Body of pancreas (tissue), 4 donors: ENCODE measurements at regions of chr3 and their contacts with region 1.

Region 1: DNA sequence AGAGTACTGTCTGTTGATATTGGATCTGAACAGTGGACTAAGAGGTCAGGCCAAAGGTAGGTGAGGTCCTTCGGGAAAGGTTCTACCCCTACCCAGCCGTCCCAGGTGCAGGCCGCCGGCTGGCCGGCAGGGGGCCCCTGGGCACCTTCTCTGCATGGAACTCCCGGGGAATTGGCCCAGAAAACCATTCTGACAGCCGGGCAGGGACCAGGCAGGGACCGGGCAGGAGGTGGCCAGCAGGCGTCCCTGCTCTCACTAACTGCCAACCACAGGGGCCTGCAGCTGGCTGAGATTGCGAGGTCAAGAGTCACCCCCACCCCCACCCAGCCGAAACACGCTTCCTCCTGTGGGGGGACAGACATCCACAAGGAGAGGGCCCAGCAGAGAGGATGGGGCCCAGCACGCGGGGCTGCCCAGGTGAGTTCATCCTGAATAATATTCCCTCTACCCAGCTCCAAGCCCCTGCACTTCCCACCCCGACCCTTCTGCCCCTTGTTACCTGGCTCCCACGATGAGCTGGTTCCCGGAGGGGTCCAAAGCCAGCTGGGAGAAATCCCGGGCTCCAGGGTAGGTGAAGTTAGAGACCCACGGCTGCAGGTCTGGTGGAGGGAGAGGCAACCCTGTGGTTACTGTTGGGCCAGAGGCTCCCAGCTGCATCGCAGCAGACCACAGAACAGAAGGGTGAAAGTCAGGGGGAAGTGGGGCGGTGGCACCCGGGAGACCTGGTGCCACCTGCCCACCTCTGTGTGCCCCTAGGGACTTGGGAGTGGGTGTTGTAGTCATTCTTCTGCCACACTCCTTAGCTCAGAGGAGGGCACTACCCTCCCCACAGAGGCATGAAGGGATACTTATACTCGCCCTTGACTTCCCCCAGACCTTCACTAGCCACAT is 84.4 kb downstream of the SEMA5B start:
- DNase-seq: peak; percentile 80 to 90 (median 86)
- ATAC-seq: peak; percentile 94
- H3K4me3 ChIP-seq: no peak overlapping the region
- H3K27ac ChIP-seq: no peak overlapping the region
- H3K4me1 ChIP-seq: peaks cover 4% of the 10 kb centered on the region
- H3K27me3 ChIP-seq: no peaks in the 10 kb centered on the region
- CTCF ChIP-seq: peak; percentile 85 to 97 (median 92)
- POLR2A ChIP-seq: no peak

Region 2: DNA sequence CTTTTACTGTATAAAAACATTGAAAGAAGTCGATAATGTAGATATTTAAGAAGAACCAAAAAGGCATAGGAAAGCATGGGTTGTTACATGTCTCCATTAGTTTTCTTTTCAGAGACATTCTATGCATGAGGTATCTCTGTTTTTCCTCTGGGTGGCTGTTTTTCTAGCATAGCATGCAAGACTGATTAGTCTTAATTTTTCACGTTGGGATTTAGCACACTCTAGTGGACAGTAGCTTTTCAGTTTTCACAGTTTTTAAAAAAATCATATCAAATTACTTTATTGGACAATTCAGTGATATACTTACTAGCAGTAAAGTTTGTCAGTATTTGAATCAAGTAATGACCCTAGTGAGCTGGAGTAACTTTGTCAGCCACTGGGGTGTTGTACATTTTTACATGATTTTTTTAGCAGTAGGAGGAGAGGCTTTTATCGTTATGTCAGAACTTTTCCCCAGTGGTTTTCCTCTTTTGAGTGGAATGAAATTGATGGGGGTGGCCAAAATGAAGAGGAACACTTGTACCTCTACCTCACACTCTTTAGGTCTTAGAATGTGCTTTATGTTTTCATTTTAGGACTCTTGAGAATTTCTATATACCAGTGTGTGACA is 315.7 kb after region 1 on chr3:
- intact Hi-C with region 1: loop called (anchors 10 kb)
- DNase-seq: no peak
- ATAC-seq: peak; percentile 69
- H3K4me3 ChIP-seq: no peak overlapping the region
- H3K27ac ChIP-seq: no peak overlapping the region
- H3K4me1 ChIP-seq: no peaks in the 10 kb centered on the region
- H3K27me3 ChIP-seq: no peaks in the 10 kb centered on the region
- CTCF ChIP-seq: peak in 6 of 7 experiments; percentile 33 to 83 (median 76)
- POLR2A ChIP-seq: no peak